MCF 10A (cell line): ENCODE measurements at regions of chr18 and their contacts with region 1.

Region 1: DNA sequence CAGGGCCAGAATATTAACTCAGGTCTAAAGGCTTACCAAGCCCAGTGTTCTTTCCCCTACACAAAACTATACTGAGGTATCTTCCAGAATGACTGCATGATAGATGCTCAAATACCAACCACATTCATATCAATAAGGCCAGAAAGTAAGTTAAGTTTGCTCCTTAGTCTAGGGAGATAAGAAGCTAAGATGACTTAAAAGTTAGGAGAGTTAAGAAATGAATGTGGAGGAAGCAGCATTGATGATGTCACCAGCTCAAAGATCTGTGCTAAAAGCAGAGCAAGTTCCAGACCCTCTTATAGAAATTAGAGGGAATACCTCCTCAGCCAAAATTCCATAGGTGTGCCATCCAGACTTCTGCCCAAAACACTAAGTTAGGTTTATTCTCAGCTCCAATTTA is 6.1 kb downstream of the PPP4R1 start:
- DNase-seq: no peak
- H3K4me3 Mint-ChIP-seq: no peak overlapping the region
- H3K27ac Mint-ChIP-seq: peak overlapping the region; percentile 88
- H3K4me1 Mint-ChIP-seq: peaks cover 47% of the 10 kb centered on the region
- H3K27me3 Mint-ChIP-seq: no peaks in the 10 kb centered on the region
- CTCF ChIP-seq: no peak

Region 2: DNA sequence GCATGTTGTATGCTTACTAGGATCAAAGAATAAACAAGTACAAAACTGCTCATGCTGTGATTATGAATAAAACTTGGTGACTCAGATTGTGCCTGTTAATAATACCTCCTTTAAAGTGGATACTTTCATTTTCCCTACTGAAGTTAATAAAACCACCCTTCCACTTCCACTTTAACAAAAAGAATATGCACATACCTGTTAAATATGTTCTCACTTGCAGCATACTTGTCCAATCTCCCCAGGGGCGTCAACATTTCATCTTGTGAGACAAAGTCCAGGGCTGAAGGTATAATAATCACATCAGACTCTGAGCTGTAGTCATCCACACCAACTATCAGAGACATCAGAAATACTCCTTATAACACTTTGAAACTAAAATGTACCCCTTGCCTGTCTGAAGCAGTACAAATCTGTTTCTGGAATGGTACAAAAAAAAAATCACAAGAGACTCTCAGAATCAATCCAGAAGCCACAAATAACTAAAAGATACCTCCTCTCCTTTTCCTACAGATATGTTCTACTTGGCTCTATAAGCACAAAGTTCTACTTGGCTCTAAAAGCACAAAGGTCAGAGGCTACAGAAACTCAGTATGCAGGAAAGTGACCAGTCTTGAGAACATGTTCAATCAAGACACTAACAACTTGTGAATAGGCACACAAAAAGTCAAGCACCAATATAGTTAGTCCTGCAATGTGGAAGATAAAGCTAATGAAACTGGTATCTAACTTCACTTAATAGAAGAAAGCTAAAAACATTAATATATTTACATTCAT is 13.3 kb before region 1 on chr18:
- CTCF ChIA-PET with region 1: interaction called, 6 read pairs
- POLR2A ChIA-PET with region 1: interaction called, 22 read pairs
- intact Hi-C with region 1: no loop called
- DNase-seq: peak; percentile 17
- H3K4me3 Mint-ChIP-seq: peak overlapping the region; percentile 48
- H3K27ac Mint-ChIP-seq: peak overlapping the region; percentile 57
- H3K4me1 Mint-ChIP-seq: peaks cover 20% of the 10 kb centered on the region
- H3K27me3 Mint-ChIP-seq: no peaks in the 10 kb centered on the region
- CTCF ChIP-seq: no peak